Mammary epithelial cell (primary cell): ENCODE measurements at regions of chr16 and their contacts with region 1.

Region 1: GRCh38 chr16:1509307-1510221 is 16.4 kb downstream of the TELO2 start:
- DNase-seq: no peak
- H3K4me3 ChIP-seq: no peak overlapping the region
- H3K27ac ChIP-seq: no peak overlapping the region
- H3K4me1 ChIP-seq: no peaks in the 10 kb centered on the region
- H3K27me3 ChIP-seq: no peaks in the 10 kb centered on the region
- CTCF ChIP-seq: no peak

Region 2: GRCh38 chr16:1216296-1216619 is 293.3 kb before region 1 on chr16:
- CTCF ChIA-PET with region 1: no interaction called
- dilution Hi-C with region 1: loop called (anchors 10 kb)
- in situ Hi-C with region 1: no loop called
- intact Hi-C with region 1: no loop called
- DNase-seq: no peak
- H3K4me3 ChIP-seq: no peak overlapping the region
- H3K27ac ChIP-seq: no peak overlapping the region
- H3K4me1 ChIP-seq: no peaks in the 10 kb centered on the region
- H3K27me3 ChIP-seq: peaks cover 2% of the 10 kb centered on the region
- CTCF ChIP-seq: no peak

Region 3: GRCh38 chr16:1545044-1546040 is 35.8 kb after region 1 on chr16:
- CTCF ChIA-PET with region 1: no interaction called
- dilution Hi-C with region 1: loop called (anchors 5 kb)
- in situ Hi-C with region 1: no loop called
- intact Hi-C with region 1: no loop called
- DNase-seq: no peak
- H3K4me3 ChIP-seq: no peak overlapping the region
- H3K27ac ChIP-seq: no peak overlapping the region
- H3K4me1 ChIP-seq: peaks cover 12% of the 10 kb centered on the region
- H3K27me3 ChIP-seq: no peaks in the 10 kb centered on the region
- CTCF ChIP-seq: no peak

Region 4: DNA sequence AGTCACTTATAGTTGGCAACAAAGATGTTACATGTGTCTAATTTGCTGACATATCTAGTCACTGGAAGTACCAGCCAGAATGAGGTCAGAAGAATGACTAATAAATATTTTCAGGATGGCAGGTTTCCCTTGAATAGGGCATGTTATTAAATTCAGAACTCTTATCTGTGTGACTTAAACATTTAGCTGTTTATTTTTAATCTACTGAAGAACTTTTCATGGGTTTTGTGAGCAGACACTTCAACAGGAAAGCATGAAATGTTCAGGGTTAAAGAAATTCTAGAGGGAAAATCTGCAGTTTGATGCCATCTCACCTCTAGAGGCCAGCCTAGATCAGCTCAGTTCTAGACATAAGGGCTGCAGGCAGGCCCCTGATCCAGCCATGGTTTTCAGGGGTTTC is 181.7 kb after region 1 on chr16:
- CTCF ChIA-PET with region 1: no interaction called
- dilution Hi-C with region 1: no loop called
- in situ Hi-C with region 1: no loop called
- intact Hi-C with region 1: no loop called
- DNase-seq: peak; percentile 75
- H3K4me3 ChIP-seq: no peak overlapping the region
- H3K27ac ChIP-seq: peak overlapping the region; percentile 97
- H3K4me1 ChIP-seq: peaks cover 56% of the 10 kb centered on the region
- H3K27me3 ChIP-seq: no peaks in the 10 kb centered on the region
- CTCF ChIP-seq: peak; percentile 19 to 48